ENCODE measurements at regions of chr1 and their contacts with region 1.

Region 1: DNA sequence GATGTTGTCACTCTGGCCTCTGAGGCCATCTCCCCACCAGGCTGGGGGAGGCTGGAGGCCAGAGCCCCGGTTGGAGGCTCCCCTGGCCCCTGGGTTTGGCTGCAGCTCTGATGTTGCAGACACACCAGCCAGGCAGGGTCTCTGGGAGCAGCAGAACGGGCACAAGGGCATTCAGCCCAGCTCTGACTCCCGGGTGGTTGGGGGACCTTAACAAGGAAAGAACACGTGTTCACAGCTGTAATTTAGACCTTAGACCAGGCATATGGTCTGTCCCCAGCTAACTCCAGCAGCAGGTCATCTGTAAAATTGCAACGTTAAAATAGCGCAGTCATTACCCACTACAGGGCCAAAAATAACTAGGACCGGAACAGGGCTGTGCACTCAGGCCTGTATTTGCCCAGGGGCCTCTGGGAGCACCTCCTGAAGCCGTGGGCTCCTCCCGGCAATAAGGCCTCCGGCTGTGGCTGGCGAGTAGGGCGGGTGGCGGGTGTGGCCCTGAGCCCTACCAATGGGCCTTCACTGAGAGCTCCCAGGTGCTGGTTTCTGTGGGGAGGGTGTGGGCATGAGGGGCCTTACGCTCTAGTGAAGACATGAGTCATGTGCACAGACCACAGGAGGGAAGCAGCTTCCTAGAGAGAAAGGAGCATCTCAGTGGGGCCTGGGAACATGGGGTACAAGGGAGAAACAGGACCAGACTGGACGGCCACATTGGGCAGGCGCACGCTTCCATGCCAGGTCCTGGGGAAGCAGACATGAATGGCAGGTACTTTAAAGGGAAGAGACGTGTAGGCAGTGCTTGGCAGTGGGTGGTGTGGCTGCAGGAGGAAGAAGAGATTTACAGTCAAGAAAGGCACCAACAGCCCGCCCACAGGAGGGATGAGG is 6.1 kb downstream of the LDLRAP1 start:
- DNase-seq: peak; percentile 95
- H3K4me3 Mint-ChIP-seq: peak overlapping the region; percentile 71
- H3K27ac Mint-ChIP-seq: peak overlapping the region; percentile 93
- H3K4me1 Mint-ChIP-seq: peaks cover 89% of the 10 kb centered on the region
- H3K27me3 Mint-ChIP-seq: no peaks in the 10 kb centered on the region

Region 2: GRCh38 chr1:25566730-25567341 is 17.3 kb after region 1 on chr1:
- CTCF ChIA-PET with region 1: interaction called, 48 read pairs
- intact Hi-C with region 1: loop called (anchors 1 kb)
- DNase-seq: peak; percentile 54
- H3K4me3 Mint-ChIP-seq: no peak overlapping the region
- H3K27ac Mint-ChIP-seq: peak overlapping the region; percentile 83
- H3K4me1 Mint-ChIP-seq: peaks cover 81% of the 10 kb centered on the region
- H3K27me3 Mint-ChIP-seq: no peaks in the 10 kb centered on the region